Activated CD8-positive, alpha-beta T cell treated with anti-CD3 and anti-CD28 coated beads, Interleukin-2, amount 10 ng/mL, durations not matched to agents 7 days and 5 days (primary cell): ENCODE measurements at regions of chr7 and their contacts with region 1.

Region 1: DNA sequence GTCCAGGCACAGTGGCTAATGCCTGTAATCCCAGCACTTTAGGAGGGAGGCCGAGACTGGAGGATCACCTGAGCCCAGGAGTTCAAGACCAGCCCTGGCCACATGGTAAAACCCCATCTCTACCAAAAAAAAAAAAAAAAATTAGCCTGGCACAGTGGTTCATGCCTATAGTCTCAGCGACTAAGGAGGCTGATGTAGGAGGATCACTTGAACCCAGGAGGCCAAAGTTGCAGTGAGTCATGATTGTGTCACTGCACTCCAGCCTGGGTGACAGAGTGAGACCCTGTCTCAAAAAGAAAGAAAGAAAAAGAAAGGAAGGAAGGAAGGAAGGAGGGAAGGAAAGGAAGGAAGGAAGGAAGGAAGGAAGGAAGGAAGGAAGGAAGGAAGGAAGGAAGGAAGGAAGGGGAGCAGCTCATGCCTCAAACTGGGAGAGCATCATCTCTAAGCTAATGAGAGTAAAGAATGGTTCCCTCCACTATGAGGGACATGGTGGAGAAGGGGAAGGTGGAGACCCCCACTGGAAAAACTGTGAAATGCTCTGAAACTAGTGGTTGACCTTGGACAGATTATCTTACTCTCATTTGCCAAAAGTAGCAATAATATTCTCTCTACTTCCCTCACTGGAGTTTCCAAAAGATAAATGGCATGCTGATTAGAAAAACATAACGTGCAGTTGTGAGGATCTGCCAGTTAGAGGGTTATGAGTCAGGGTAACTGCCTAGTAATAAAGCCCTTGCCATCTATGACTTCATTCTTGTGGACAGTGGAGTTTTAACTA is 16.8 kb downstream of the GIMAP5 start:
- DNase-seq: peak; percentile 50
- ATAC-seq: peak; percentile 21
- H3K4me3 Mint-ChIP-seq: peak overlapping the region; percentile 40
- H3K27ac Mint-ChIP-seq: peak overlapping the region; percentile 86
- H3K4me1 Mint-ChIP-seq: peaks cover 70% of the 10 kb centered on the region
- H3K27me3 Mint-ChIP-seq: no peaks in the 10 kb centered on the region

Region 2: GRCh38 chr7:150520145-150520544 is 233.9 kb before region 1 on chr7:
- CTCF ChIA-PET with region 1: interaction called, 18 read pairs
- POLR2A ChIA-PET with region 1: interaction called, 23 read pairs
- DNase-seq: peak; percentile 56
- ATAC-seq: peak; percentile 50
- H3K4me3 Mint-ChIP-seq: peak overlapping the region; percentile 97
- H3K27ac Mint-ChIP-seq: peak overlapping the region; percentile 87
- H3K4me1 Mint-ChIP-seq: peaks cover 34% of the 10 kb centered on the region
- H3K27me3 Mint-ChIP-seq: no peaks in the 10 kb centered on the region

Region 3: GRCh38 chr7:150631866-150632864 is 121.8 kb before region 1 on chr7 and contains the start of gene GIMAP6:
- CTCF ChIA-PET with region 1: interaction called, 6 read pairs
- POLR2A ChIA-PET with region 1: interaction called, 13 read pairs
- DNase-seq: peak; percentile 59
- ATAC-seq: peak; percentile 68
- H3K4me3 Mint-ChIP-seq: peak within 1 kb of the TSS; percentile 89
- H3K27ac Mint-ChIP-seq: peak within 1 kb of the TSS; percentile 90
- H3K4me1 Mint-ChIP-seq: peaks cover 60% of the 10 kb centered on the region
- H3K27me3 Mint-ChIP-seq: no peaks in the 10 kb centered on the region
- total RNA-seq, gene GIMAP6: 88.9 to 93.3 TPM

Region 4: DNA sequence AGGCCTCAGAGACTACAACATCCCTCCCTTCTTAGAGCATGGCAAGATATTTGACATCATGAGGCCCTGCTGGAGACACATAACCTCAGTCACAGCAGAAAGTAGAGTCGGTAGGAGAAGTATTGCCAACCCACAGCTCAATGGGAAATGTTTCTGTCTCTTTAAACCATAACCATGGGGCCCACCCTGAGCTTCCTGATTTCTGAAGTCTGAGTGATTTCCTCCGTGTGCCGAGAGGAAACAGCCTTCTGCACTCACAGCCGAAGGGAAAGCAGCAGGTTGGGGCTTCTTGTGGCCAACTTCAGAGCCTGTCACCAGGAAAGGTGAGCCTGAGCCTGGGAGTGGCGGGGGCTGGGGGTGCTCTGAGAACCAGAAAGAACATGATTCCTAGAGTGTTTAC is 37.6 kb before region 1 on chr7 and contains the start of gene GIMAP1:
- CTCF ChIA-PET with region 1: interaction called, 18 read pairs
- POLR2A ChIA-PET with region 1: interaction called, 15 read pairs
- DNase-seq: peak; percentile 71
- ATAC-seq: peak; percentile 85
- H3K4me3 Mint-ChIP-seq: peak within 1 kb of the TSS; percentile 97
- H3K27ac Mint-ChIP-seq: peak within 1 kb of the TSS; percentile 87
- H3K4me1 Mint-ChIP-seq: peaks cover 51% of the 10 kb centered on the region
- H3K27me3 Mint-ChIP-seq: no peaks in the 10 kb centered on the region
- total RNA-seq, gene GIMAP1: 19.0 to 20.2 TPM